ENCODE measurements at regions of chr1 and their contacts with region 1.

Region 1: GRCh38 chr1:160726498-160727315 is 12.3 kb upstream of the SLAMF7 start:
- DNase-seq: peak; percentile 70
- H3K4me3 Mint-ChIP-seq: no peak overlapping the region
- H3K27ac Mint-ChIP-seq: no peak overlapping the region
- H3K4me1 Mint-ChIP-seq: peaks cover 31% of the 10 kb centered on the region
- H3K27me3 Mint-ChIP-seq: no peaks in the 10 kb centered on the region

Region 2: GRCh38 chr1:160567858-160568682 is 158.6 kb before region 1 on chr1:
- CTCF ChIA-PET with region 1: no interaction called
- POLR2A ChIA-PET with region 1: no interaction called
- DNase-seq: peak; percentile 72
- H3K4me3 Mint-ChIP-seq: peak overlapping the region; percentile 58
- H3K27ac Mint-ChIP-seq: peak overlapping the region; percentile 97
- H3K4me1 Mint-ChIP-seq: peaks cover 77% of the 10 kb centered on the region
- H3K27me3 Mint-ChIP-seq: no peaks in the 10 kb centered on the region

Region 3: DNA sequence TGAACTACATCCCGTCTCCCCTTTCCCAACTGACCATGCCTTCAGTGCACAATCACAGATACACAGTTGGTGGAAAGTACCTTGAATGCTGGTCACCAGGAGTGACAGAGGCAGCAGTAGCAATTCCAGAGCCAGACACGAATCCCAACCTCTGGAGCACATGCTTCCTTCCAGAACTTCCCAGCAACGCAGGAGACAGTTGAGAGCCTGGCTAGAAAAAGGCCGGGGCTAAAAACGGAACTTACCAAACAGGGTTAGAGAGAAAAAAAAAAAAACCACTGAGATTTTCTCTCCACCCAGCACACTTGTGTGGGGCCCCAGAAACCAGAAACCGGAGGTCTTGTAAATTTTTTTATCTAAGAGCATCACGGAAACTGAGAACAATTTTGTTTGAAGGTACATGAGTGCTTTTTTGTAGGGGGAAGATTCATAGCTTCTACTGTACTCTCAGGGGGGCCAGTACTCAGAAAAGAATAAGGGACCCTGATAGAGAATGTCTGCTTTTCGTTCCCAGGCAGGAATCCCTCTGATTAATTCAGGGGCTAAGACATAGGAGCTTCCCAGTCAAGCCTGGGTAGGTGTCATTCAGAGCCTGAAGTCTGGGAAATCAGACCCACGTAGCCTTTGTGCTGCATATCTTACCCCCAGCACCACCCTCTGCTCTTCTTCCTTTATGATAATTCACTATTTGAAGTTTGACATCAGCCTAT is 14.9 kb before region 1 on chr1 and contains the start of gene CD48:
- CTCF ChIA-PET with region 1: interaction called, 51 read pairs
- POLR2A ChIA-PET with region 1: interaction called, 40 read pairs
- DNase-seq: peak; percentile 61
- H3K4me3 Mint-ChIP-seq: no peak within 1 kb of the TSS
- H3K27ac Mint-ChIP-seq: no peak within 1 kb of the TSS
- H3K4me1 Mint-ChIP-seq: peaks cover 20% of the 10 kb centered on the region
- H3K27me3 Mint-ChIP-seq: no peaks in the 10 kb centered on the region
- total RNA-seq, gene CD48: 403 to 404 TPM

Region 4: GRCh38 chr1:160739098-160739511 is 12.4 kb after region 1 on chr1 and contains the start of gene SLAMF7:
- CTCF ChIA-PET with region 1: interaction called, 14 read pairs
- POLR2A ChIA-PET with region 1: interaction called, 3 read pairs
- DNase-seq: peak; percentile 44
- H3K4me3 Mint-ChIP-seq: peak within 1 kb of the TSS; percentile 67
- H3K27ac Mint-ChIP-seq: no peak within 1 kb of the TSS
- H3K4me1 Mint-ChIP-seq: peaks cover 56% of the 10 kb centered on the region
- H3K27me3 Mint-ChIP-seq: peaks cover 2% of the 10 kb centered on the region
- total RNA-seq, gene SLAMF7: 13.7 to 15.3 TPM

Region 5: GRCh38 chr1:160744199-160744851 is 17.6 kb after region 1 on chr1:
- CTCF ChIA-PET with region 1: interaction called, 14 read pairs
- POLR2A ChIA-PET with region 1: interaction called, 3 read pairs
- DNase-seq: no peak
- H3K4me3 Mint-ChIP-seq: peak overlapping the region; percentile 36
- H3K27ac Mint-ChIP-seq: peak overlapping the region; percentile 75
- H3K4me1 Mint-ChIP-seq: peaks cover 64% of the 10 kb centered on the region
- H3K27me3 Mint-ChIP-seq: no peaks in the 10 kb centered on the region

Region 6: GRCh38 chr1:160777486-160778089 is 50.9 kb after region 1 on chr1:
- CTCF ChIA-PET with region 1: interaction called, 30 read pairs
- POLR2A ChIA-PET with region 1: interaction called, 3 read pairs
- DNase-seq: peak; percentile 56
- H3K4me3 Mint-ChIP-seq: no peak overlapping the region
- H3K27ac Mint-ChIP-seq: no peak overlapping the region
- H3K4me1 Mint-ChIP-seq: peaks cover 37% of the 10 kb centered on the region
- H3K27me3 Mint-ChIP-seq: no peaks in the 10 kb centered on the region

Region 7: DNA sequence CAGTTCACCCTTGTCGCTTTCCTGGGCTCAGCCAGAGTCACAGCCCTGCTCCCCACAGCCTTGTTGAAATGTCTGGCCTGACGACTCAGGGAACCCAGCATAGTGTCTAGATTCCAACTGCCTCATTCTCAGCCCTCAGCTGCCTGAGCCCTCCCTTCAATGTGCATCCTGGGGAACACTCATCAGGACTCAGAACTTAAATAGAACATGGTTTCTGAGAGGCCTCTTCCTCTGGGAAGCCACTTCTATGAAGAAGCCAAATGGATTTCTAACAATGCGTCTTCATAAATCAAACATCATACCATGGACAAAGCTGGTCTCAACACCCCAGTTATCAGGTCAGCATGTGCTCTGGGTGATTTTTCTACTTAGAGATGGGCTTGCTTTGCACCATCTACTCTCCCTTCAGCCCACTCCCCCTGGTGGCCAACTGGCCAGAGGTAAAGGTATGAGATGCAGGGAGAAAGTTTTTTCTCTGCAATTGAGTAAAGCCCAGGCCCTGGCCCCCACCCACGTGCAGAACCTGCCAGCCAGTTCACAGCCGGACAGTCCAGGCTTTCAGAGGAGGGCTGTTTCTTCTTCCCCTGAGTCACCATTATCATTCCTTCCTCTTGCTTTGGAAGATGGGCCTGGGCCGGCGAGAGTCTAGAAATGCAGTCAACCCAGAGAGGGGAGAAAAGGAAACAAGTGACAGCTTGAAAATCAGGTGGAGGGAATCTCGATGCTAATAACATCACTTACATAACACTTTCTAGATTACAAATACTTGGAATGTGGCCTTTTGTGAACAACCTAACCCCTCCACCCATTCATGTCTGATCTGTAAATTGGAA is 103.8 kb after region 1 on chr1:
- CTCF ChIA-PET with region 1: interaction called, 47 read pairs
- POLR2A ChIA-PET with region 1: no interaction called
- DNase-seq: peak; percentile 80
- H3K4me3 Mint-ChIP-seq: no peak overlapping the region
- H3K27ac Mint-ChIP-seq: no peak overlapping the region
- H3K4me1 Mint-ChIP-seq: peaks cover 18% of the 10 kb centered on the region
- H3K27me3 Mint-ChIP-seq: no peaks in the 10 kb centered on the region

Region 8: DNA sequence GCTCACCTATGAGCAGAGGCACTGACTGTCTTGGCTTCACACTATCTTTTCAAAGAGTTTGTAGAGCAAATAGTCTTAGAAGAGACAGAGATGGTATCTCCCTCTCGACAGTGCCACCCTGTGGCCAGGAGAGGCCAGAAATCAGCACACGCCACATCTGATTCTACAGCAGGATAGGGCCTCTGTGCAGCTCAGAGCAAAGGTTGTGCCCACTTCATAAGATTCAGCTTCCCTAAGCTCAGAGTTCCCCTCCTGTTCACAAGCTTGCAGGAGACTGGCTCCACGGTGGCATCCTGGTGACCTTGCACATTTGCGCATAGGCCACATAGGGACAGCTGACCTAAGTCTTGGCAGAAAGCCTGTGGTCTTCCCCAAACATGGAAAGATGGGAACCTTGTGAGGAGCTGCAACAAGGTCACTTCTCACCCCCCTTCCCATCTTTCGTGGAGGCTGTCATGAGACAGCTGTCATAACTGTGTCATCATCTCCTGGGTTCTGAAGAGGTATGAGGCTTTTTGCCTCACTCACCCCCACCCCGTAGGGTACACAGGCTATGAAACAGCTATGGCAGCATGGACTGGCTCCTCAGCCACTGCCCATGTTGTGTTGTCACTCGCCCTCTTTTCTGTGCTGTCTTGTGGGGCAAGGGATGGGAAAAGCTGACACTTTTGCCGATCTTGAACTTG is 224.9 kb after region 1 on chr1:
- CTCF ChIA-PET with region 1: interaction called, 82 read pairs
- POLR2A ChIA-PET with region 1: no interaction called
- DNase-seq: peak; percentile 81
- H3K4me3 Mint-ChIP-seq: no peak overlapping the region
- H3K27ac Mint-ChIP-seq: no peak overlapping the region
- H3K4me1 Mint-ChIP-seq: peaks cover 7% of the 10 kb centered on the region
- H3K27me3 Mint-ChIP-seq: no peaks in the 10 kb centered on the region